CD4-positive, alpha-beta T cell (primary cell): ENCODE measurements at regions of chr3 and their contacts with region 1.

Region 1: GRCh38 chr3:182792901-182793662 is at the start of gene ATP11B:
- DNase-seq: peak; percentile 60 to 90 (median 75)
- ATAC-seq: peak; percentile 59
- H3K4me3 ChIP-seq: peak within 1 kb of the TSS; percentile 84
- H3K4me3 Mint-ChIP-seq: peak within 1 kb of the TSS; percentile 100
- H3K27ac ChIP-seq: peak within 1 kb of the TSS; percentile 95 to 98
- H3K27ac Mint-ChIP-seq: peak within 1 kb of the TSS; percentile 100
- H3K4me1 ChIP-seq: peaks cover 17% of the 10 kb centered on the region
- H3K4me1 Mint-ChIP-seq: peaks cover 43% of the 10 kb centered on the region
- H3K27me3 ChIP-seq: no peaks in the 10 kb centered on the region
- H3K27me3 Mint-ChIP-seq: no peaks in the 10 kb centered on the region
- CTCF ChIP-seq: no peak
- total RNA-seq, gene ATP11B: 139 to 143 TPM

Region 2: GRCh38 chr3:180989291-180990163 is 1803.6 kb before region 1 on chr3 and contains the start of gene DNAJC19:
- CTCF ChIA-PET with region 1: no interaction called
- POLR2A ChIA-PET with region 1: no interaction called
- intact Hi-C with region 1: loop called in 1 of 2 experiments (anchors 5 kb)
- DNase-seq: peak; percentile 82 to 97 (median 85)
- ATAC-seq: peak; percentile 96
- H3K4me3 ChIP-seq: peak within 1 kb of the TSS; percentile 85
- H3K4me3 Mint-ChIP-seq: peak within 1 kb of the TSS; percentile 99
- H3K27ac ChIP-seq: peak within 1 kb of the TSS; percentile 65 to 66
- H3K27ac Mint-ChIP-seq: peak within 1 kb of the TSS; percentile 94
- H3K4me1 ChIP-seq: peaks cover 8% of the 10 kb centered on the region
- H3K4me1 Mint-ChIP-seq: peaks cover 50% of the 10 kb centered on the region
- H3K27me3 ChIP-seq: no peaks in the 10 kb centered on the region
- H3K27me3 Mint-ChIP-seq: peaks cover 5% of the 10 kb centered on the region
- CTCF ChIP-seq: no peak
- total RNA-seq, gene DNAJC19: 28.7 to 40.2 TPM

Region 3: DNA sequence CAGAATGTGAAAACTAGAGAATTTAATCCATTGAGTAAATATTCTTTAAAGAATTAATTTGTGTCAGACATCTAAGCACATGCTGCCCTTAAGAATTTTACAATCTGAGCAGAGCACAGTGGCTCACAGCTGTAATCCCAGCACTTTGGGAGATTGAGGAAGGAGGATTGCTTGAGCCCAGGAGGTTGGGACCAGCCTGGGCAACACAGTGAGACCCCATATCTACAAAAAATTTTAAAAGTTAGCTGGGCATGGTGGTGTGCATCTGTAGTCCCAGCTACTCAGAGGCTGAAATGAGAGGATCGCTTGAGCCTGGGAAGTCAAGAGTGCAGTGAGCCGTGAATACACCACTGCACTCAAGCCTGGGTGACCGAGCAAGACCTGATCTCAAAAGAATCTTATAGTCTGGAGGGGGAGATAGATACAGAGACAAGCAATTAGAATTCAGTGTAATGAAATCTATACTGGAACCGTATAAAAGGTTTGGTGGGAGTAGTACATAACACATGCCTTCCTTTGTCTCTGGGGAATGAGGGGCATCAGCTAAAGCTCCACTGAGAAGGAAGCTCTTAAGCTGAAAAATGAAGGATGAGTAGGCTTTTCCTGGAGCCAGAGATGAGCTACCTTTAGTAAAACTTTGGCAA is 21.5 kb after region 1 on chr3:
- CTCF ChIA-PET with region 1: no interaction called
- POLR2A ChIA-PET with region 1: interaction called, 13 read pairs
- intact Hi-C with region 1: loop called in 1 of 2 experiments (anchors 2 kb)
- DNase-seq: no peak
- ATAC-seq: no peak
- H3K4me3 ChIP-seq: no peak overlapping the region
- H3K4me3 Mint-ChIP-seq: peak overlapping the region; percentile 13
- H3K27ac ChIP-seq: no peak overlapping the region
- H3K27ac Mint-ChIP-seq: peak overlapping the region; percentile 58
- H3K4me1 ChIP-seq: peaks cover 5% of the 10 kb centered on the region
- H3K4me1 Mint-ChIP-seq: peaks cover 80% of the 10 kb centered on the region
- H3K27me3 ChIP-seq: no peaks in the 10 kb centered on the region
- H3K27me3 Mint-ChIP-seq: no peaks in the 10 kb centered on the region
- CTCF ChIP-seq: no peak

Region 4: DNA sequence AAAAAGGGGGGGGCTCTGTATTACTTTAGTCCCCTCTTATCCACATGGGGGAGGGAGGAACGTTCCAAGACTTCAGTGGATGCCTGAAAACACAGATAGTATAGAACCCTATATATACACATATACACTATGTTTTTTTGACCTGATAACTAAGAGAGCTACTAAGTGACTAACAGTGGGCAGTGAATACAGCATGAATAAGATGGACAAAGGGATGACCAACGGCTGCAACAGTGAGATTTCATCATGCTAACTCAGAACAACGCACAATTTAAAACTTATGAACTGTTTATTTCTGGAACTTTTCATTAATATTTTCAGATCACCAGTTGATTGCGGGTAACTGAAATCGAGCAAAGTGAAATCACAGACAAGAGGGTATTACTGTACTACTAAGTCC is 180.0 kb after region 1 on chr3:
- CTCF ChIA-PET with region 1: no interaction called
- POLR2A ChIA-PET with region 1: no interaction called
- intact Hi-C with region 1: loop called in 1 of 2 experiments (anchors 1 kb)
- DNase-seq: no peak
- ATAC-seq: no peak
- H3K4me3 ChIP-seq: no peak overlapping the region
- H3K4me3 Mint-ChIP-seq: no peak overlapping the region
- H3K27ac ChIP-seq: no peak overlapping the region
- H3K27ac Mint-ChIP-seq: no peak overlapping the region
- H3K4me1 ChIP-seq: peaks cover 13% of the 10 kb centered on the region
- H3K4me1 Mint-ChIP-seq: peaks cover 61% of the 10 kb centered on the region
- H3K27me3 ChIP-seq: no peaks in the 10 kb centered on the region
- H3K27me3 Mint-ChIP-seq: no peaks in the 10 kb centered on the region
- CTCF ChIP-seq: no peak